ENCODE measurements at regions of chr3 and their contacts with region 1.

Region 1: DNA sequence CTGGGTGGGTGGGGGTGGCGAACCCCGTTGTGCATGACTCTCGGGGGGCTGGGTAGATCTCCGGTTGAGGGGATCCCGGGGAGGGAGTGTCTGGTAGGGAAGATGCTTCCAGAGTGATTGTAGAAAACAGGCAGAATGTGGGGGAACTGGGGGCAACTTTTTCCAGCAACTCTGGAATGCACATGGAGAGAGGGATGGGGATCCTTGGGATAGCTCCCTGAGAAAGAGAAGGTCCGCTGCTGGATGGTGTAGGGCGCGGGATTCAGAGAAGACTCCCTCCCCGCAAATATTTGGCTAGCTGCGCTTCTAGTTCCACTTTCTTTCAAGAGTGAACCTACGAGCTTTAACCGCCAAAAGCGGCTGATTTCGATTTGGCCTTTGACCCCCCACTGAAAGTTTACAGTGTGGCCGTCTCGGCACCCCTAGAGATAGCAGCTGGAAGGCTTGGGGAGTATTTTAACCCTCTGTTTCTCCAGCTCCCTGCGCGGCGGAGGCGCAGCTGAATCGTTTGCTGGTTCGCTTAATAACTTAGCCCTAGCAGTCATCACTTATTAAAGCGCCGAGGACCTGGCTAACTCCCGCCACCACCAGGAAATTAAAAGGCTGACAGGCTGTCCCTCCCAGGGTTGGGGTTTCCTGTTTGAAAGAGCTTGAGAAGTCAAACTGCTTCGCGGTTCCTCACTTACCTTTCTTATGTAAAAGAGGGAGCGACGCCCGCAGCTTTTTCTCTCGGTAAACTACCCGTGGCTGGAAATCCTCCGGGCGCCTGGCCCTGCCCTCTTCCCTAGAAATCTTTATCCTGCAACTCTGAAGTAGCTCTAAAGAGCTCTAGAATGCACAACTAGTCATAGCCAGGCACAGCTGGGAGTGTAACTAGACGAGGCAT is 1.2 kb downstream of the PHLDB2 start:
- DNase-seq: peak; percentile 78 to 85
- ATAC-seq: peak; percentile 89
- H3K4me3 ChIP-seq: peak overlapping the region; percentile 78 to 79
- H3K27ac ChIP-seq: peak overlapping the region; percentile 92 to 95
- H3K4me1 ChIP-seq: peaks cover 0 to 10% of the 10 kb centered on the region in 2 donors
- H3K27me3 ChIP-seq: no peaks in the 10 kb centered on the region

Region 2: GRCh38 chr3:111627092-111627491 is 233.1 kb before region 1 on chr3:
- intact Hi-C with region 1: no loop called
- DNase-seq: no peak
- ATAC-seq: no peak
- H3K4me3 ChIP-seq: no peak overlapping the region
- H3K27ac ChIP-seq: no peak overlapping the region
- H3K4me1 ChIP-seq: no peaks in the 10 kb centered on the region
- H3K27me3 ChIP-seq: no peaks in the 10 kb centered on the region

Region 3: GRCh38 chr3:111717601-111718000 is 142.6 kb before region 1 on chr3:
- intact Hi-C with region 1: loop called (anchors 2 kb)
- DNase-seq: peak; percentile 66 to 79
- ATAC-seq: peak; percentile 93
- H3K4me3 ChIP-seq: no peak overlapping the region
- H3K27ac ChIP-seq: no peak overlapping the region
- H3K4me1 ChIP-seq: no peaks in the 10 kb centered on the region
- H3K27me3 ChIP-seq: no peaks in the 10 kb centered on the region

Region 4: GRCh38 chr3:111737706-111738086 is 122.5 kb before region 1 on chr3:
- intact Hi-C with region 1: loop called in 1 of 2 experiments (anchors 5 kb)
- DNase-seq: peak in 1 of 2 donors; percentile 66
- ATAC-seq: peak; percentile 83
- H3K4me3 ChIP-seq: no peak overlapping the region
- H3K27ac ChIP-seq: peak overlapping the region in 1 of 2 donors; percentile 76
- H3K4me1 ChIP-seq: peaks cover 2 to 9% of the 10 kb centered on the region in 2 donors
- H3K27me3 ChIP-seq: no peaks in the 10 kb centered on the region

Region 5: DNA sequence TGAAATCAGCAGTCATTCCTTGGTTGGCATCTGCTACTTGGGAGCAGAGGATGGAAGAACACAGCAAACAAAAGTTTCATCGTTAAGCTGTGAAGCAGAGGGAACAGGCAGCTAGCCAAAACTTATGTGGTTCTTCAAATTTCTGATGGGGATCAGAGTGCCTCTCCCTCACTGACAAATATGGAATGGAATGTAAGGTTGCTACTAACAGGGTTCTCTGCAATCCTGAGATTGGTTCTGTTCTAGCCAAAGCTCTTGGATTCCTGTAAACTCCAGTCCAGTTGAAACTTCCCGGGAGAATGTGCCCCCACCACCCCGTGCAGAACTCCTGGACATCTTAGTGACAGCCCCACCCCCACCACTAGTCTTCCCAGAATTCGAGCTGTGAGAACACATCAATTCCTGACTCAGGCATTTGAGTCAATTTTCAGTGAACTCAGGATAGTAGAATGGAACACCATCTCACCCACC is 57.1 kb before region 1 on chr3:
- intact Hi-C with region 1: loop called in 1 of 2 experiments (anchors 2 kb)
- DNase-seq: peak; percentile 91 to 92
- ATAC-seq: peak; percentile 87
- H3K4me3 ChIP-seq: no peak overlapping the region
- H3K27ac ChIP-seq: peak overlapping the region in 1 of 2 donors; percentile 27
- H3K4me1 ChIP-seq: peaks cover 0 to 9% of the 10 kb centered on the region in 2 donors
- H3K27me3 ChIP-seq: no peaks in the 10 kb centered on the region

Region 6: DNA sequence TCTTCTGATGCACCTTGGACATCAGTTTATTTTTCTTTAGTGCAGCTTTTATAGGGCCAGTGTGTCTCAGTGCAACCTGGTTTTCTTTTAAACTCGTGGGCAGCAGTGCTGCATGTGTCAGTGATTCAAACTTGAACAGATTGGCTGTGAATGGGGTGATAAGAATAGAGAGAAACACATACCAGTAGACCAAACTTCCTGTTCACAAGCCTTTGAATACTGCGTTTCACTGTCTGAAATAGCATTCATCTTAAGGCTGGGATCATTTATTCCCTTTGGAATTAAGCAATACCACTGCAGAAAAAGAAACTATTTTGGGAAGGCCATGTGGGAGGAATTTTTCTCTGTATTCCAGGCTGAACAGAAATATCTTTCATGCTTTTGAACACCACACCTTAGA is 50.6 kb after region 1 on chr3:
- intact Hi-C with region 1: loop called in 1 of 2 experiments (anchors 5 kb)
- DNase-seq: no peak
- ATAC-seq: peak; percentile 36
- H3K4me3 ChIP-seq: peak overlapping the region in 1 of 2 donors; percentile 10
- H3K27ac ChIP-seq: no peak overlapping the region
- H3K4me1 ChIP-seq: peaks cover 7 to 9% of the 10 kb centered on the region in 2 donors
- H3K27me3 ChIP-seq: no peaks in the 10 kb centered on the region

Region 7: GRCh38 chr3:111967651-111968274 is 107.5 kb after region 1 on chr3:
- intact Hi-C with region 1: loop called (anchors 5 kb)
- DNase-seq: peak; percentile 88 to 90
- ATAC-seq: peak; percentile 93
- H3K4me3 ChIP-seq: no peak overlapping the region
- H3K27ac ChIP-seq: no peak overlapping the region
- H3K4me1 ChIP-seq: peaks cover 0 to 2% of the 10 kb centered on the region in 2 donors
- H3K27me3 ChIP-seq: no peaks in the 10 kb centered on the region